Activated B cell treated with CpG ODN at 0.5 μM for 24 hours (primary cell): ENCODE measurements at regions of chr5 and their contacts with region 1.

Region 1: GRCh38 chr5:52915176-52915875 is 73.8 kb upstream of the ITGA2 start:
- DNase-seq: no peak
- ATAC-seq: peak; percentile 80
- H3K4me3 Mint-ChIP-seq: no peak overlapping the region
- H3K27ac Mint-ChIP-seq: no peak overlapping the region
- H3K4me1 Mint-ChIP-seq: peaks cover 5% of the 10 kb centered on the region
- H3K27me3 Mint-ChIP-seq: peaks cover 2% of the 10 kb centered on the region
- CTCF ChIP-seq: no peak

Region 2: GRCh38 chr5:52657247-52657645 is 258.1 kb before region 1 on chr5:
- CTCF ChIA-PET with region 1: interaction called, 6 read pairs
- POLR2A ChIA-PET with region 1: no interaction called
- intact Hi-C with region 1: loop called (anchors 10 kb)
- DNase-seq: no peak
- ATAC-seq: no peak
- H3K4me3 Mint-ChIP-seq: no peak overlapping the region
- H3K27ac Mint-ChIP-seq: no peak overlapping the region
- H3K4me1 Mint-ChIP-seq: no peaks in the 10 kb centered on the region
- H3K27me3 Mint-ChIP-seq: peaks cover 4% of the 10 kb centered on the region
- CTCF ChIP-seq: no peak

Region 3: DNA sequence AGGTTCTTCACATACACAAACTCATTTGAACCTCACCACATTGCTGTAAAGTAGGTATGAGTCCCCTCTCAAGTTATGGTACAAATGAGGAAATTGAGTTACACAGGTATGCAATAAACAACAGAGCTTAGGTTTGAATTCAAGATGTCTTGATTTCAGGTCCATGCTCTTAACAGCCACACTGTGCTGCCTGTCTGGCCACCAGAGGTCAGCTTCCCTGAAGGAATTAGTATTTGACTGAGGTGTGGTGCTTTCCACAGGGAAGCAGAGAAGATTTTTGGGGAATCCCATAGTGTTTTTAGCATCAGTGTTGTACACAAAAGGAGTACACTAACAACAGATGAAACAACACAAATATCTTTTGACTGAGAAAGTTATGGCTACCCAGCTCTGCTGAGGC is 222.0 kb before region 1 on chr5:
- CTCF ChIA-PET with region 1: interaction called, 9 read pairs
- POLR2A ChIA-PET with region 1: no interaction called
- intact Hi-C with region 1: loop called (anchors 1 kb)
- DNase-seq: no peak
- ATAC-seq: no peak
- H3K4me3 Mint-ChIP-seq: no peak overlapping the region
- H3K27ac Mint-ChIP-seq: no peak overlapping the region
- H3K4me1 Mint-ChIP-seq: no peaks in the 10 kb centered on the region
- H3K27me3 Mint-ChIP-seq: peaks cover 4% of the 10 kb centered on the region
- CTCF ChIP-seq: no peak

Region 4: DNA sequence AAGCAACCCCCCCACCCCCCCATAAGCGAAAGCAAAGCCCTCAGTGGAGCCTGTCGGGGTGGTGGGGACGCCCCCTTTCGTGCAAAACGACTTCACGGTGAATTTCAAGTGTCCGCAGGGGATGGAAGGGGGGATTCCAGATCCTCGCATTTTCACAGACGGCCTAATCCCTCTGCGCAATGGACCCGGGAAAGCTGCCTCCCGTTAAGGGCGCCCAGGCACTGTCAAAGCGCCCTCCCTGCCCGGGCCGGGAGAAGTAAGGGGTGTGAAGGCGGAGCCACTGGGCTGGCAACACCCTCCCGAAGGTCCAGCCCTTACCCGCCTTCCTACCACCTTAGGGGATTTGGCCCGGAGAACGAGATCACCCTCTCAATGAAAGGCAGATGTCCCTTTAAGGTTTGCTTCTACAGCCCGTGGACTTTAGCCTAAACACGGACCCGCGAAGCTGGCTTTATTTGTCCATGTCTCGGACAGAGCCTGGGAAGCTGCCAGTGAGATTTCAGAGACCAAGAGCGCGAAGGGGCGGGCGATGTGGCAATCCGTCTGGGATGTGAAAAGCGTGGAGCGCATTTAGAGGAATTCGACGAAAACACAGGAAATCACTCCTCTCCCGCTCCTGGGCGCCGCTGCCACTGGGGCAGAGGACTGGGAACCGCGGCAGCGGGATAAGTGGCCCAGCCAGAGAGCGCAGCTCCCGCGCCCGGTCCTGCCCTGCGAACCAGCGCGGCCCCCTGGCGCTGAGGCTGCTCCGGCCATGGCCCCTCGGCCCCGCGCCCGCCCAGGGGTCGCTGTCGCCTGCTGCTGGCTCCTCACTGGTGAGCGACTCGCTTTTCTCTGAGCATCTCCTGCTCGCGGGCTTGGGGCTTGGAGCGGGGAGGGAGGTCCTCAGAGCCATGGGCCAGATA is 127.5 kb before region 1 on chr5 and contains the starts of genes ITGA1 and PELO:
- CTCF ChIA-PET with region 1: interaction called, 4 read pairs
- POLR2A ChIA-PET with region 1: no interaction called
- intact Hi-C with region 1: loop called (anchors 1 kb)
- DNase-seq: peak; percentile 51
- ATAC-seq: peak; percentile 80
- H3K4me3 Mint-ChIP-seq: peak within 1 kb of the TSS; percentile 91
- H3K27ac Mint-ChIP-seq: peak within 1 kb of the TSS; percentile 78
- H3K4me1 Mint-ChIP-seq: peaks cover 15% of the 10 kb centered on the region
- H3K27me3 Mint-ChIP-seq: peaks cover 22% of the 10 kb centered on the region
- CTCF ChIP-seq: no peak
- total RNA-seq, gene ITGA1: 28.4 and 34.0 TPM in 2 replicates
- total RNA-seq, gene PELO: 20.0 and 23.0 TPM in 2 replicates